ENCODE measurements at regions of chr2 and their contacts with region 1.

Region 1: GRCh38 chr2:238288650-238289573 is 502 bp upstream of the PER2 start:
- DNase-seq: peak; percentile 99
- H3K4me3 ChIP-seq: peak overlapping the region; percentile 86 to 90
- H3K27ac ChIP-seq: peak overlapping the region; percentile 98 to 99
- H3K4me1 ChIP-seq: peaks cover 0 to 48% (median 43%) of the 10 kb centered on the region in 4 donors
- H3K27me3 ChIP-seq: no peaks in the 10 kb centered on the region
- CTCF ChIP-seq: peak; percentile 19 to 20

Region 2: GRCh38 chr2:238320246-238320647 is 31.3 kb after region 1 on chr2 and contains the start of gene TRAF3IP1:
- intact Hi-C with region 1: loop called (anchors 2 kb)
- DNase-seq: peak; percentile 90 to 94
- H3K4me3 ChIP-seq: peak within 1 kb of the TSS; percentile 79 to 92
- H3K27ac ChIP-seq: peak within 1 kb of the TSS; percentile 61 to 78
- H3K4me1 ChIP-seq: peaks cover 0 to 26% (median 11%) of the 10 kb centered on the region in 4 donors
- H3K27me3 ChIP-seq: no peaks in the 10 kb centered on the region
- CTCF ChIP-seq: peak in 1 of 2 experiments; percentile 14

Region 3: DNA sequence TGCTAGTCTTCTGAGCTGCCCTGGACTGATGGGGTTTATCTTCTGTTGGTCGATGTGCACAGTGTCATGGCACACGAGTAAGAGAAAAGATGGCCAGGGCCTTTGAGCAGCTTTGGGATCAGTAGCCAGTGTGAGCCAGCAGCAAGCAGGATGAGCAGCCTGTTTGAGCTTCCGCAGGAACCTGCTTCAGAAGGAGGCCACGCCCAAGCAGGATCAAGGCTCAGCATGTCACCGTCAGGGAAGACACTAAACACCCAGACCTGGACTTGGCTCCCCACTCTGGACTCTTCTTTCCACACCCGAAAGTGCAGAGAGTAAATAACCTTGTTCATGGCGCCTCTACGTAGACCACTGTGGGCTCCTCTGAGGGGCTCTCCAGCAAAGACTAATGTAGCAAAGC is 112.6 kb after region 1 on chr2:
- intact Hi-C with region 1: no loop called
- DNase-seq: no peak
- H3K4me3 ChIP-seq: no peak overlapping the region
- H3K27ac ChIP-seq: no peak overlapping the region
- H3K4me1 ChIP-seq: no peaks in the 10 kb centered on the region
- H3K27me3 ChIP-seq: no peaks in the 10 kb centered on the region
- CTCF ChIP-seq: no peak

Region 4: GRCh38 chr2:240249423-240250149 is 1960.7 kb after region 1 on chr2:
- intact Hi-C with region 1: loop called (anchors 10 kb)
- DNase-seq: no peak
- H3K4me3 ChIP-seq: no peak overlapping the region
- H3K27ac ChIP-seq: peak overlapping the region; percentile 90 to 97
- H3K4me1 ChIP-seq: peaks cover 0 to 63% (median 47%) of the 10 kb centered on the region in 4 donors
- H3K27me3 ChIP-seq: no peaks in the 10 kb centered on the region
- CTCF ChIP-seq: no peak